ENCODE measurements at regions of chr4 and their contacts with region 1.

Region 1: GRCh38 chr4:88818631-88819470 is 121.2 kb upstream of the NAP1L5 start:
- DNase-seq: peak; percentile 13
- H3K4me3 ChIP-seq: no peak overlapping the region
- H3K27ac ChIP-seq: peak overlapping the region in 1 of 2 experiments; percentile 47; a peak in 2 of 4 replicates
- H3K4me1 ChIP-seq: peaks cover 0 to 9% of the 10 kb centered on the region in 2 experiments; a peak in 2 of 4 replicates
- H3K27me3 ChIP-seq: no peaks in the 10 kb centered on the region
- CTCF ChIP-seq: peak; percentile 59
- EP300 ChIP-seq: no peak
- RAD21 ChIP-seq: peak; percentile 92

Region 2: DNA sequence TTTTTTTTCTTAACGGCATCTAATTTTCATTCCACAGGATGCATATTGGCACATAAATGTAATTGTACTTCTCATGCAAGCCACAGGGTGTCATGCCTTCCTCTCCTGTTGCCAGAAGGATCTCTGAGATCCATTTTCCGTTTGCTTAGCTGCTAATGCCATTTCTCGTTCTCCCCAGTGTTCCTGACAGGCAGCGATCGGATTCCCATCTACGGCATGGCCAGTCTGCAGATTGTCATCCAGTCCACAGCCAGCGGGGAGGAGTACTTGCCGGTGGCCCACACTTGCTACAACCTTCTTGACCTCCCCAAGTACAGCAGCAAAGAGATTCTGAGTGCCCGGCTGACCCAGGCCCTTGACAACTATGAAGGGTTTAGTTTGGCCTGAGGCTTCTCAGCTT is 112.3 kb before region 1 on chr4:
- CTCF ChIA-PET with region 1: interaction called, 21 read pairs
- POLR2A ChIA-PET with region 1: no interaction called
- DNase-seq: peak; percentile 57
- H3K4me3 ChIP-seq: no peak overlapping the region
- H3K27ac ChIP-seq: peak overlapping the region in 1 of 2 experiments; percentile 25; a peak in 1 of 4 replicates
- H3K4me1 ChIP-seq: peaks cover 0 to 2% of the 10 kb centered on the region in 2 experiments; a peak in 1 of 4 replicates
- H3K27me3 ChIP-seq: no peaks in the 10 kb centered on the region
- CTCF ChIP-seq: peak; percentile 68
- EP300 ChIP-seq: no peak
- RAD21 ChIP-seq: peak; percentile 88

Region 3: GRCh38 chr4:89029591-89029990 is 210.7 kb after region 1 on chr4:
- CTCF ChIA-PET with region 1: interaction called, 184 read pairs
- POLR2A ChIA-PET with region 1: no interaction called
- DNase-seq: no peak
- H3K4me3 ChIP-seq: no peak overlapping the region
- H3K27ac ChIP-seq: no peak overlapping the region
- H3K4me1 ChIP-seq: no peaks in the 10 kb centered on the region
- H3K27me3 ChIP-seq: no peaks in the 10 kb centered on the region
- CTCF ChIP-seq: no peak
- EP300 ChIP-seq: no peak
- RAD21 ChIP-seq: no peak

Region 4: DNA sequence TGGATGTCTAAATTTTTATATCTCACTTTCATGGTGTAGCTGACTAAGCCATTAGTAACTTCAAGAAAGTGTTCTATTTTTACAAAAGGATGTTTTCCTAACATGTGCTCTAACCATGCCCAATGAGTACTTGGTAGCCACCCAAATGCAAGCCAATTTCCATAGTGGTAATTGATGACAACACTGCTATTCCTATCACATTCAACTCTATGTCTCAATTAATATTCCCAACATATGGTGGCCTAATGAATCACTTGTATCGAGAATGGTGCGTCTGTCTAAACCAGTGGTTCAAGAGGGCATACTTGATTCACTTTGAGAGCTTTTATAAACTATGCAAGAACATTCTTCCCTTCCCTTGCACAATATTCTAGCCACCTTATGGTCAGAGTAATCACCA is 601.7 kb after region 1 on chr4:
- CTCF ChIA-PET with region 1: no interaction called
- POLR2A ChIA-PET with region 1: no interaction called
- DNase-seq: no peak
- H3K4me3 ChIP-seq: no peak overlapping the region
- H3K27ac ChIP-seq: no peak overlapping the region
- H3K4me1 ChIP-seq: no peaks in the 10 kb centered on the region
- H3K27me3 ChIP-seq: no peaks in the 10 kb centered on the region
- CTCF ChIP-seq: no peak
- EP300 ChIP-seq: no peak
- RAD21 ChIP-seq: no peak